Right cardiac atrium (tissue), 5 donors: ENCODE measurements at regions of chr2 and their contacts with region 1.

Region 1: GRCh38 chr2:19349911-19350677 is 8.3 kb downstream of the OSR1 start:
- DNase-seq: peak; percentile 63 to 86 (median 84)
- ATAC-seq: peak; percentile 30 to 48
- H3K4me3 ChIP-seq: peak overlapping the region; percentile 7
- H3K27ac ChIP-seq: no peak overlapping the region
- H3K4me1 ChIP-seq: peaks cover 9% of the 10 kb centered on the region
- H3K27me3 ChIP-seq: no peaks in the 10 kb centered on the region

Region 2: DNA sequence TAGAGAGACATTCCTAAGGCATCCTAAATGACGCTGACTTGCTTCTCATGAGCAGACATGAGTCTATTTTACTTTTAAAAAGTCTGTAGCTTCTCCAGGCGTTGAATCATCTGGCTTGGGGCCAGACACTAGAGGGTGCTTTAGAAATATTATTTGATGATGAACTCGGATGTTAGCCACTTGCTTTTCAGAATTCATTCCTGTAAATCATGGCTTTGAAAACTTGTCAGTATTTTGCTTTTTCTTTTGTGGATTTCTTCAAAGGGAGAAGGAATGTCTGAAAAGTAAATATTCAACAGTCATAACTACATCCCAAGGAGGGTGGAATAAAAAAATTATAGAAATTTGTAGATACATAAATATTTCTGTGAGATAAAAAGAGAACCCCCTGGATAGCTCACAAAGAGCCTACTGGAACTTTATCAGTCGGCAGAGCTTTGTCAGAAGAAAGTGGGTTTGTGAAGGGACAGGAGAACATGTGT is 362.5 kb before region 1 on chr2:
- intact Hi-C with region 1: loop called in 2 of 4 experiments (anchors 10 kb)
- DNase-seq: peak; percentile 68 to 89 (median 81)
- ATAC-seq: no peak
- H3K4me3 ChIP-seq: no peak overlapping the region
- H3K27ac ChIP-seq: no peak overlapping the region
- H3K4me1 ChIP-seq: peaks cover 4% of the 10 kb centered on the region
- H3K27me3 ChIP-seq: no peaks in the 10 kb centered on the region

Region 3: GRCh38 chr2:19456705-19457309 is 106.7 kb after region 1 on chr2:
- intact Hi-C with region 1: no loop called
- DNase-seq: no peak
- ATAC-seq: no peak
- H3K4me3 ChIP-seq: no peak overlapping the region
- H3K27ac ChIP-seq: no peak overlapping the region
- H3K4me1 ChIP-seq: no peaks in the 10 kb centered on the region
- H3K27me3 ChIP-seq: no peaks in the 10 kb centered on the region